Astrocyte of the cerebellum (primary cell): ENCODE measurements at regions of chr4 and their contacts with region 1.

Region 1: DNA sequence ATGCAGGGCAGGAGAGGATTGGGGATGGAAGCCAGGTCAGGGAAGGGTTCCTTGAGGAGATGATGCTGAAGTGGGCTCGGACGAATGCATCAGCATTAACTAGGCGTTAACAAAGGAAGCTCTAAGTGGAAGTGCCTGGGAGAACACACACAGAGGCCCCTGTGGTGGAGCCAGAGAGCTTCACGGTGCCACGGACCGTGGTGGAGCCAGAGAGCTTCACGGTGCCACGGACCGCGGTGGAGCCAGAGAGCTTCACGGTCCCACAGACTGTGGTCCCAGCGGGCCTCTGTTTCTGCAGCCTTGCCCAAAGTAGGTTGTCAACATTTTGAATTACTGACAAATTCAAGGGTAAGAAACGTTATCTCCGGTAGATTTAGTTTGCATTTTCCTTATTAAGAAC is 48.3 kb downstream of the TRIML2 start:
- DNase-seq: no peak
- H3K4me3 ChIP-seq: no peak overlapping the region
- CTCF ChIP-seq: no peak

Region 2: GRCh38 chr4:187940299-187940698 is 120.8 kb before region 1 on chr4:
- in situ Hi-C with region 1: no loop called
- DNase-seq: no peak
- H3K4me3 ChIP-seq: no peak overlapping the region
- CTCF ChIP-seq: no peak

Region 3: GRCh38 chr4:188021548-188022249 is 39.4 kb before region 1 on chr4:
- in situ Hi-C with region 1: no loop called
- DNase-seq: no peak
- H3K4me3 ChIP-seq: no peak overlapping the region
- CTCF ChIP-seq: no peak

Region 4: DNA sequence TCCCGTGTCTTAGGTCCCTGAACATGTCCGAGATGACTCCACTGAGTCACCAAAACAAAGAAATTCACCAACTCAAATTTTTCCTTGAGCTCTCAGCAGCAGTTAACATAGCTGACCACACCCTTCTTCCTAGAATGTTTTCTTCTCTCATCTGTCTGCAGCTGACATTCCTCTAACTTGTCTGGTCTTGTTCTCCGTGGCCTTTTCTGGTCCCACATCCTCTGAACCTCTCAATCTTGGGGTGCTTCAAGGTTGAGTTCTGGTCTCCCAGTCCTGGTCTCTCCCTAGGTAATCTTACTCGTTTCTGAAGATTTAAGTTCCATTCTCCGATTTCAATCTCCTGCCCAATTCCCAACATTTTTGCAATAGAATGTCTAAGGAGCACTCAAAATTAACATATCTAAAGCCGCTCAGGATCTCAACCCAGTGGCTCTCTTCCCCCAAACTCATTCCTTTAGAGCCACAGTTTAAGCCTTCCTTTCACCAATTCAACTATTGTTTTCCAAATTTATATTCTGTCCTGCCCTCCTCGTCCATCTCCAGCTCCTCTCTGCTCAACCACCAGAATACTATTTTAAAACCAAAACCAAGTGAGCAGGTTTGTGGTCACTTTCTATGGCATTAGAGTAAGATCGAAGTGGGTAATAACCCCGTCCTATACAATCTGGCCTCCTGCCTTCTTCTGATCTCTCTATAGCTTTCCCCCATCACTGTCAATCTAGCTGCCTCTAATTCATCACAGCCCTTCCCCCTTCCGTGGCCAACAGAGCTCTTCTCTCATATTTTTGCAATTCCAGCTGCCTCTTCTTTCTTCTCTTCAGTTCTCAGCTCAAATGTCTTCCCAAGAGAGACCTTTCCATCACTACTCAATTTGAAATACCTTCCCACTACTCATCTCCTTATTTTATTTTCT is 47.1 kb after region 1 on chr4:
- in situ Hi-C with region 1: loop called (anchors 5 kb)
- DNase-seq: no peak
- H3K4me3 ChIP-seq: no peak overlapping the region
- CTCF ChIP-seq: no peak

Region 5: DNA sequence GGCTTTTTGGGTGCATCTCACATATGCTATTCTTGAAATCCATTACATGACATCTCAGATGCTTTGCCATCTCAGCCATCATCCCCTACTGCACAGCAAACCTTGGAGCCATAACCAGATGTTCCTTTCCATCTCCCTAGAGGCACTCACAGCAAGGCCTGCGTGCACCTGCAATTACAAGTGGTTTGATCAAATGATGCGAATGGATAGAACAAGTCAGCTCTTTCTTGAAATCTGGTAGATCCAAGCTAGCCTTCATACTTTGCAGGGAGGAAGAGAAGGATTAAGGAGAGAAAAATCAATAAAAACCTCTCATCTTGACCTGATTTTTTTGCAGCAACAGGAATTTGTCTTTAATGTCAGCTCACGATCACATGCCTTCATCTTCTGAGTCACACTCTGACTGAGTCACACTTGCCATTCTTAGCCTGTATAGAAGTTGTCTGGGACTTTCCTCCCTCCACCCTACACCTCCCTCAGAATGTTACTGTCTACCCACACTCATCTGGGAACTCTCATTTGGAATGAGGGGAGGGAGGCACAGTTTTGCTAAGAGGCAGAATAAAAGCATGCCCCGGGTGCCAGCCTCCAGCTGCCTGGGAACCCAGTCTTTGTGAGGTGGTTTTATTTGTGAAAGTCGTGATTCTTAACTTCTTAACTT is 66.3 kb after region 1 on chr4:
- in situ Hi-C with region 1: no loop called
- DNase-seq: no peak
- H3K4me3 ChIP-seq: no peak overlapping the region
- CTCF ChIP-seq: no peak